Activated CD8-positive, alpha-beta T cell treated with anti-CD3 and anti-CD28 coated beads for 36 hours (primary cell): ENCODE measurements at regions of chr20 and their contacts with region 1.

Region 1: GRCh38 chr20:64119681-64120341 is 12.4 kb upstream of the NPBWR2 start:
- DNase-seq: peak; percentile 15
- ATAC-seq: peak; percentile 17
- H3K4me3 Mint-ChIP-seq: peak overlapping the region; percentile 51
- H3K27ac Mint-ChIP-seq: peak overlapping the region; percentile 80
- H3K4me1 Mint-ChIP-seq: peaks cover 9% of the 10 kb centered on the region
- H3K27me3 Mint-ChIP-seq: peaks cover 7% of the 10 kb centered on the region
- CTCF ChIP-seq: no peak

Region 2: GRCh38 chr20:64101731-64102621 is 17.8 kb before region 1 on chr20:
- CTCF ChIA-PET with region 1: interaction called, 30 read pairs
- POLR2A ChIA-PET with region 1: interaction called, 3 read pairs
- intact Hi-C with region 1: no loop called
- DNase-seq: peak; percentile 79
- ATAC-seq: peak; percentile 82
- H3K4me3 Mint-ChIP-seq: peak overlapping the region; percentile 46
- H3K27ac Mint-ChIP-seq: no peak overlapping the region
- H3K4me1 Mint-ChIP-seq: peaks cover 16% of the 10 kb centered on the region
- H3K27me3 Mint-ChIP-seq: peaks cover 14% of the 10 kb centered on the region
- CTCF ChIP-seq: peak; percentile 98